Naive thymus-derived CD4-positive, alpha-beta T cell (primary cell): ENCODE measurements at regions of chr14 and their contacts with region 1.

Region 1: GRCh38 chr14:61403411-61403810 is 82.0 kb downstream of the PRKCH start:
- DNase-seq: peak in 7 of 9 donors; percentile 52 to 79 (median 67)
- ATAC-seq: peak; percentile 89
- H3K4me3 ChIP-seq: peak overlapping the region; percentile 3
- H3K4me3 Mint-ChIP-seq: peak overlapping the region; percentile 17 to 84 (median 76)
- H3K27ac ChIP-seq: peak overlapping the region; percentile 71
- H3K27ac Mint-ChIP-seq: peak overlapping the region in 8 of 9 donors; percentile 76 to 96 (median 91)
- H3K4me1 ChIP-seq: peaks cover 84 to 88% of the 10 kb centered on the region in 2 donors
- H3K4me1 Mint-ChIP-seq: peaks cover 0 to 93% (median 70%) of the 10 kb centered on the region in 7 donors
- H3K27me3 ChIP-seq: no peaks in the 10 kb centered on the region
- H3K27me3 Mint-ChIP-seq: no peaks in the 10 kb centered on the region

Region 2: GRCh38 chr14:61296719-61297502 is 106.5 kb before region 1 on chr14:
- CTCF ChIA-PET with region 1: interaction called, 4 read pairs
- POLR2A ChIA-PET with region 1: no interaction called
- intact Hi-C with region 1: loop called in 1 of 2 experiments (anchors 5 kb)
- DNase-seq: peak in 7 of 9 donors; percentile 38 to 68 (median 52)
- ATAC-seq: peak; percentile 85
- H3K4me3 ChIP-seq: no peak overlapping the region
- H3K4me3 Mint-ChIP-seq: peak overlapping the region in 2 of 10 donors; percentile 20 to 39
- H3K27ac ChIP-seq: no peak overlapping the region
- H3K27ac Mint-ChIP-seq: peak overlapping the region in 7 of 9 donors; percentile 26 to 88 (median 66)
- H3K4me1 ChIP-seq: peaks cover 15 to 40% of the 10 kb centered on the region in 2 donors
- H3K4me1 Mint-ChIP-seq: peaks cover 18 to 59% (median 56%) of the 10 kb centered on the region in 7 donors
- H3K27me3 ChIP-seq: no peaks in the 10 kb centered on the region
- H3K27me3 Mint-ChIP-seq: no peaks in the 10 kb centered on the region

Region 3: GRCh38 chr14:61335671-61336275 is 67.6 kb before region 1 on chr14:
- CTCF ChIA-PET with region 1: no interaction called
- POLR2A ChIA-PET with region 1: interaction called, 16 read pairs
- intact Hi-C with region 1: no loop called
- DNase-seq: peak in 7 of 9 donors; percentile 55 to 84 (median 78)
- ATAC-seq: peak; percentile 77
- H3K4me3 ChIP-seq: peak overlapping the region; percentile 4
- H3K4me3 Mint-ChIP-seq: peak overlapping the region; percentile 65 to 97 (median 84)
- H3K27ac ChIP-seq: peak overlapping the region; percentile 94
- H3K27ac Mint-ChIP-seq: peak overlapping the region in 8 of 9 donors; percentile 96 to 100 (median 100)
- H3K4me1 ChIP-seq: peaks cover 80 to 86% of the 10 kb centered on the region in 2 donors
- H3K4me1 Mint-ChIP-seq: peaks cover 60 to 88% (median 77%) of the 10 kb centered on the region in 7 donors
- H3K27me3 ChIP-seq: no peaks in the 10 kb centered on the region
- H3K27me3 Mint-ChIP-seq: no peaks in the 10 kb centered on the region

Region 4: GRCh38 chr14:61388173-61388975 is 15.0 kb before region 1 on chr14:
- CTCF ChIA-PET with region 1: interaction called, 4 read pairs
- POLR2A ChIA-PET with region 1: interaction called, 13 read pairs
- intact Hi-C with region 1: loop called (anchors 1 to 2 kb)
- DNase-seq: peak in 6 of 9 donors; percentile 38 to 56 (median 50)
- ATAC-seq: peak; percentile 76
- H3K4me3 ChIP-seq: peak overlapping the region; percentile 50
- H3K4me3 Mint-ChIP-seq: peak overlapping the region in 1 of 10 donors; percentile 74
- H3K27ac ChIP-seq: peak overlapping the region; percentile 71
- H3K27ac Mint-ChIP-seq: no peak overlapping the region
- H3K4me1 ChIP-seq: peaks cover 93 to 96% of the 10 kb centered on the region in 2 donors
- H3K4me1 Mint-ChIP-seq: peaks cover 0 to 46% (median 12%) of the 10 kb centered on the region in 7 donors
- H3K27me3 ChIP-seq: no peaks in the 10 kb centered on the region
- H3K27me3 Mint-ChIP-seq: no peaks in the 10 kb centered on the region

Region 5: DNA sequence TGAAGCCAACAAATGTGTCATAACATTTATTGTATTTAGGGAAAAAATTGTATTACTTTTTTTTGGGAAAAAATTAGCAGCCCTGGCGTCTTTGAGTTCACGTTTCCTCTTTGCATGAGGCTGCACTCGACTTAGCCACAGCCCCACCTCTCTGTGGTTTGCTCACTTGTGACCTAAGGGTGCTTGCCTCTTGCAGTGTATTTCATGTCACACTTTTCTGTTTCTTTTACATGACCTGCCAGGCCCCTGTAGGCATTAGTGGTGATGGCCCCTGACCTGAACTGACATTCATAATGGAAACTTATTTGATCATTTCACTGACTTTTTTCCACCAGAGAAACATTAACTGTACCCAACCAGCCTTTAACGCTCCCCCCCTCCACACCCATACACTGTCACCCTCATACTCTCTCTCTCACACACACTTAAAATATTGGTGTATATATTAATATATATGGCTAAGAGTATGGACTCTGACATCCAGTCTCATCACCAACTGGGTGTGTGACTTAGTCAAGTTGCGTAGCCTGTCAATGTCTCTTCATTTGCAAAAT is 40.9 kb after region 1 on chr14:
- CTCF ChIA-PET with region 1: interaction called, 3 read pairs
- POLR2A ChIA-PET with region 1: interaction called, 5 read pairs
- intact Hi-C with region 1: loop called (anchors 2 to 5 kb)
- DNase-seq: peak in 8 of 9 donors; percentile 36 to 77 (median 54)
- ATAC-seq: peak; percentile 89
- H3K4me3 ChIP-seq: peak overlapping the region; percentile 9
- H3K4me3 Mint-ChIP-seq: peak overlapping the region; percentile 61 to 89 (median 82)
- H3K27ac ChIP-seq: peak overlapping the region; percentile 59
- H3K27ac Mint-ChIP-seq: peak overlapping the region in 8 of 9 donors; percentile 86 to 97 (median 92)
- H3K4me1 ChIP-seq: peaks cover 77 to 90% of the 10 kb centered on the region in 2 donors
- H3K4me1 Mint-ChIP-seq: peaks cover 56 to 99% (median 93%) of the 10 kb centered on the region in 7 donors
- H3K27me3 ChIP-seq: no peaks in the 10 kb centered on the region
- H3K27me3 Mint-ChIP-seq: no peaks in the 10 kb centered on the region